K562 (cell line): ENCODE measurements at regions of chrX and their contacts with region 1.

Region 1: DNA sequence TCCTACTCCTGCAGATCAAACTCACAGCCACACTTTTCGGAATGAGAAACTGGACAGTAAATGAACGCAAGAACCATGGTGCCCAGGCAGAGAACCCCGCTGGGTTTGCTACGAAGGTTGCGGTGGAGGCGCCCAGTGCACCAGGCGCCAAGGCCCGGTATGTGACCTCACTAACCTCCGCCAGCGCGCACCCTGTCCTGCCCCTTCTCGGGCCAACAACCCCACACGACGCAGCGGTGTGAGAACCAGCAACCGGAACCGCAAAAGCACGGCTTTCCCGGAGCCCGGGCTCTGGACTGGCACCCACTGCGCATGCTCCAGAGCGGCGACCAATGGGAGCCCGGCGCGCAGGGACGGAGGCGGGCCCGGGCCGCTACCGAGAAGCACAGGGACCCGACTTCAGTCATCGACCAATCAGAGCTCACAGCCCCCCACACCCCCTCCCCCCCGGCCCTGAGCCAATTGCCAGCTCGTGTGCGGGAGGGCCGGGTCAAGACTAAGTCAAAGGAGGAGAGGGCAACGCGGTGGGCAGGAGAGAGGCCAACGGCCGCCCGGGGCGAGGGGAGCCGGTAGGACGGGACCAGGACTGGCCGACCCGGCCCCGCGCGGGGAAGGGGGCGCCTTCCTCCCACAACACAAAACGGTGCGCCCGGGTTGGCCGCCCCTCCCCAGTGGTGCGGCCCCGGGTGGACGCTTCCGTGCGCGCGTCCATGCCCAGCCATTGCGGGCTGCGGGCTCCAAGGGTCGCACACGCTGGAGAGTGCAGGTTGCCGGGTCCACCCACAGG is 7.3 kb upstream of the WAS start:
- DNase-seq: peak; percentile 94 to 99 (median 98)
- ATAC-seq: peak; percentile 96
- H3K4me3 ChIP-seq: peak overlapping the region; percentile 88
- H3K27ac ChIP-seq: peak overlapping the region; percentile 89
- H3K4me1 ChIP-seq: peaks cover 21 to 26% of the 10 kb centered on the region in 2 experiments; a peak in 4 of 5 replicates
- H3K27me3 ChIP-seq: no peaks in the 10 kb centered on the region
- CTCF ChIP-seq: no peak
- EP300 ChIP-seq: no peak
- POLR2A ChIP-seq: peak; percentile 76
- RAD21 ChIP-seq: no peak

Region 2: GRCh38 chrX:48558271-48558670 is 118.0 kb before region 1 on chrX:
- CTCF ChIA-PET with region 1: no interaction called
- POLR2A ChIA-PET with region 1: no interaction called
- in situ Hi-C with region 1: no loop called
- intact Hi-C with region 1: no loop called
- DNase-seq: no peak
- ATAC-seq: no peak
- H3K4me3 ChIP-seq: no peak overlapping the region
- H3K27ac ChIP-seq: no peak overlapping the region
- H3K4me1 ChIP-seq: no peaks in the 10 kb centered on the region; a peak in 1 of 5 replicates
- H3K27me3 ChIP-seq: no peaks in the 10 kb centered on the region
- CTCF ChIP-seq: no peak
- EP300 ChIP-seq: no peak
- POLR2A ChIP-seq: no peak
- RAD21 ChIP-seq: no peak

Region 3: DNA sequence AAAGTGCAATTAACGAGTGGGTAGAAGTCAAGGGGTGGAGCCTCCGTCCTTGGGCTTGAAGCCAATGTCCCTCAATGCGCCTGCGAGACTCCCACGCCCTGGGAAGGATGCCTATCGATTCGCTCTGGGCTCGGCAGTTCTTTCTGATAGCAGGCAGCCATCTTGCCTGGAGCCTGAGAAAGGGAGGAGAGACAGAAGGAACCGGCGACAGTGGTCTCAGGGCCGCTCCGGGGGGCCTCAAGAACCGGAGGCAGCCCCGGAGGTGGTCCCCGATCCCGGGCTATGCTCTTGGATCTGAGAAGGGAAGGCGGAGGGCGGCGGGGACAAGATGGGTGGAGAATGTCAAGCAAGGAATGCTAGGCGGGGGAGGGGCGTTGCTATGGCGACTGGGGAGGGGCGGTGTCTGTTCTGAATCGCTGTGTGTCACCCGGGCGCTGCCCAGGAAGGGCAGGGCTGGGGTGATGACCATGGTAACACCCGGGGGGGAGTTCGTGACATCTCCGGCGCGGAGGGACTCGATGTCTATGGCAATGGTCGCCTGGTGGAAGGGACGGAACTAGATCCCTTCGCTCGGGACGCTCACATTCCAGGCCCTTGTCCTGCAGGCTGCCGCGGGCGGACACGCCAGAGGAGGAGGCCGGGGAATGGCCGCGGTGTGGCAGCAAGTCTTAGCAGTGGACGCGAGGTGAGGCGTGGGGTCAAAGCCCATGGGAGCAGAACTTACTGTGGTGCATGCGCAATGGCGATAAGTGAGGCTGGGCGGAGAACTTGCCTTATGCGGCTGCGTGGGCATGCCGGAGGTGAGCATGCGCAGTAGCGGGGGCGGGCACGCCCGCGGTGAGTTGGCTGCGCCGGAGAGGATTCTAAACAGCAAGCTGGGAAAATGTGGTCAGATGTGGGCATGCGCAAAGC is 78.7 kb before region 1 on chrX and contains the start of gene WDR13:
- CTCF ChIA-PET with region 1: no interaction called
- POLR2A ChIA-PET with region 1: no interaction called
- in situ Hi-C with region 1: no loop called
- intact Hi-C with region 1: loop called (anchors 5 kb)
- DNase-seq: peak; percentile 90 to 96 (median 93)
- ATAC-seq: peak; percentile 91
- H3K4me3 ChIP-seq: peak within 1 kb of the TSS; percentile 94
- H3K27ac ChIP-seq: peak within 1 kb of the TSS; percentile 97
- H3K4me1 ChIP-seq: peaks cover 7 to 36% of the 10 kb centered on the region in 2 experiments; a peak in 4 of 5 replicates
- H3K27me3 ChIP-seq: no peaks in the 10 kb centered on the region
- CTCF ChIP-seq: no peak
- EP300 ChIP-seq: peak; percentile 42
- POLR2A ChIP-seq: peak; percentile 86
- RAD21 ChIP-seq: no peak
- polyA plus RNA-seq, gene WDR13: 7.4 to 16.0 TPM

Region 4: DNA sequence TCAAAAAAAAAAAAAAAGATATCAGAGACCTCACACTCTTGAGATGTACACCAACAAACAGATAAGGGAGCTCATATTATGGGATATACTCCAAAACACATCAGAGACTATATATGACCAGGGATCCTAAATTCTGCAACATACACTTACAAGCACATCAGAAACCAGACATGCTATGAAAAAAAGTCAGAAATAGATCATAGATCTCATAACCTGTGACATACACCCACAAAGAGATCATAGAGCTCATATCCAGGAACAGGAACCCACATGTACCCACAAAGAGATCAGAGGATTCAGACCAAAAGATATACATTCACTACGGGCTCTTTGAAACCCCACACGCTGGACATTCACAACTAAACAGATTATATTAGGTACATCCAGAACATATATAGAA is 50.3 kb after region 1 on chrX:
- CTCF ChIA-PET with region 1: no interaction called
- POLR2A ChIA-PET with region 1: no interaction called
- in situ Hi-C with region 1: no loop called
- intact Hi-C with region 1: no loop called
- DNase-seq: no peak
- ATAC-seq: no peak
- H3K4me3 ChIP-seq: no peak overlapping the region
- H3K27ac ChIP-seq: no peak overlapping the region
- H3K4me1 ChIP-seq: no peaks in the 10 kb centered on the region; a peak in 2 of 5 replicates
- H3K27me3 ChIP-seq: no peaks in the 10 kb centered on the region
- CTCF ChIP-seq: no peak
- EP300 ChIP-seq: no peak
- POLR2A ChIP-seq: no peak
- RAD21 ChIP-seq: no peak

Region 5: GRCh38 chrX:48786341-48786800 is 110.1 kb after region 1 on chrX and contains the start of gene GATA1:
- CTCF ChIA-PET with region 1: no interaction called
- POLR2A ChIA-PET with region 1: no interaction called
- in situ Hi-C with region 1: no loop called
- intact Hi-C with region 1: no loop called
- DNase-seq: peak; percentile 75 to 87 (median 80)
- ATAC-seq: peak; percentile 69
- H3K4me3 ChIP-seq: peak within 1 kb of the TSS; percentile 75
- H3K27ac ChIP-seq: peak within 1 kb of the TSS; percentile 85
- H3K4me1 ChIP-seq: peaks cover 36 to 62% of the 10 kb centered on the region in 2 experiments; a peak in 4 of 5 replicates
- H3K27me3 ChIP-seq: no peaks in the 10 kb centered on the region
- CTCF ChIP-seq: no peak
- EP300 ChIP-seq: no peak
- POLR2A ChIP-seq: peak; percentile 78
- RAD21 ChIP-seq: no peak
- polyA plus RNA-seq, gene GATA1: 11.9 to 97.4 TPM

Region 6: DNA sequence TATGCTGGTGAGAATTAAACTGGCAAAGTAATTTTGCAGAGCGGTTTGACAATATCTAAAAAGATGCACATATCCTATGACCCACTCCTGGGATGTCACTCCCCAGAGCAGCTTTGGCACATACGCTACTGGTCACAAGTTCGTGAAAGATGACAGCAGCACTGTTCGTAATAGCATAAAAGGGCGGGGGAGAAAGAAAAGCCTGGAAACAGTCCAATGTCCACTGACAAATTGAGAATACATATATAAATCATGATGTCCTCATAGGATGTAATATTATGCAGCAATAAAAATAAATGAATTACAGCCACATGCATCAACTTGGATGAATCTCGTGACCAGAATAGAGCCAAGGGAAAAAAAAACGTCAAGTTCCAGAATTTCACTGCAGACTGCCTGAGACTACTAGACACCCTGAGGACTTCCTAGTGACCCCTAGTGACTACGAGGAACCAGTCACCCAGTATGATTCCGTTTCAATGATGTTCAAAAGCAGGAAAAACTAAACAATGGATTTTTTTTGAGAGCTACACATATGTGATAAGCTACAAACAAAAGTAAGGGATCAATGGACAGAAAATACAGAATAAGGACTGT is 157.3 kb after region 1 on chrX:
- CTCF ChIA-PET with region 1: no interaction called
- POLR2A ChIA-PET with region 1: no interaction called
- in situ Hi-C with region 1: no loop called
- intact Hi-C with region 1: no loop called
- DNase-seq: peak in 2 of 4 experiments; percentile 27 to 41
- ATAC-seq: peak; percentile 88
- H3K4me3 ChIP-seq: no peak overlapping the region
- H3K27ac ChIP-seq: no peak overlapping the region
- H3K4me1 ChIP-seq: peaks cover 0 to 23% of the 10 kb centered on the region in 2 experiments; a peak in 2 of 5 replicates
- H3K27me3 ChIP-seq: no peaks in the 10 kb centered on the region
- CTCF ChIP-seq: peak; percentile 30 to 39 (median 32); a peak in 4 of 6 replicates
- EP300 ChIP-seq: no peak
- POLR2A ChIP-seq: no peak
- RAD21 ChIP-seq: peak in 1 of 2 experiments; percentile 49; a peak in 2 of 4 replicates